Activated CD4-positive, alpha-beta T cell treated with anti-CD3 and anti-CD28 coated beads for 36 hours (primary cell): ENCODE measurements at regions of chr2 and their contacts with region 1.

Region 1: DNA sequence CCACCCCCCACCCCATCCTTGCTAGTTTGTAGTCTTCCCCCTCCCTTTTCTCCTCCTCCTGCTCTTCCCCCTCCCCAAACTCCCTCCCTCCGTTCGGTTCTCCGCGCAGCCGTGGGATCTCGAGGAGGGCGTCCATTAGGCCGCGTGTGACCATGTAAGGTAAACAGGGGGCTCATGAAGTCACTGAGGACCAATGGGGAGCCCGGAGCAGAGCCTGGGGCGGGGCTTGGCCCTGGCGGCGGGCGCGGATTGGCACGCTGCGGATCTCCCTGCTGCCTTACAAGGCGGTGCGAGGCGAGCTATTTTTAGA is 246 bp upstream of the KLF7 start:
- DNase-seq: peak; percentile 98
- ATAC-seq: peak; percentile 91
- H3K4me3 Mint-ChIP-seq: peak overlapping the region; percentile 90
- H3K27ac Mint-ChIP-seq: peak overlapping the region; percentile 95
- H3K4me1 Mint-ChIP-seq: peaks cover 44% of the 10 kb centered on the region
- H3K27me3 Mint-ChIP-seq: no peaks in the 10 kb centered on the region

Region 2: GRCh38 chr2:206740800-206741199 is 425.2 kb before region 1 on chr2:
- CTCF ChIA-PET with region 1: no interaction called
- POLR2A ChIA-PET with region 1: no interaction called
- intact Hi-C with region 1: no loop called
- DNase-seq: no peak
- ATAC-seq: no peak
- H3K4me3 Mint-ChIP-seq: no peak overlapping the region
- H3K27ac Mint-ChIP-seq: no peak overlapping the region
- H3K4me1 Mint-ChIP-seq: peaks cover 7% of the 10 kb centered on the region
- H3K27me3 Mint-ChIP-seq: peaks cover 14% of the 10 kb centered on the region

Region 3: DNA sequence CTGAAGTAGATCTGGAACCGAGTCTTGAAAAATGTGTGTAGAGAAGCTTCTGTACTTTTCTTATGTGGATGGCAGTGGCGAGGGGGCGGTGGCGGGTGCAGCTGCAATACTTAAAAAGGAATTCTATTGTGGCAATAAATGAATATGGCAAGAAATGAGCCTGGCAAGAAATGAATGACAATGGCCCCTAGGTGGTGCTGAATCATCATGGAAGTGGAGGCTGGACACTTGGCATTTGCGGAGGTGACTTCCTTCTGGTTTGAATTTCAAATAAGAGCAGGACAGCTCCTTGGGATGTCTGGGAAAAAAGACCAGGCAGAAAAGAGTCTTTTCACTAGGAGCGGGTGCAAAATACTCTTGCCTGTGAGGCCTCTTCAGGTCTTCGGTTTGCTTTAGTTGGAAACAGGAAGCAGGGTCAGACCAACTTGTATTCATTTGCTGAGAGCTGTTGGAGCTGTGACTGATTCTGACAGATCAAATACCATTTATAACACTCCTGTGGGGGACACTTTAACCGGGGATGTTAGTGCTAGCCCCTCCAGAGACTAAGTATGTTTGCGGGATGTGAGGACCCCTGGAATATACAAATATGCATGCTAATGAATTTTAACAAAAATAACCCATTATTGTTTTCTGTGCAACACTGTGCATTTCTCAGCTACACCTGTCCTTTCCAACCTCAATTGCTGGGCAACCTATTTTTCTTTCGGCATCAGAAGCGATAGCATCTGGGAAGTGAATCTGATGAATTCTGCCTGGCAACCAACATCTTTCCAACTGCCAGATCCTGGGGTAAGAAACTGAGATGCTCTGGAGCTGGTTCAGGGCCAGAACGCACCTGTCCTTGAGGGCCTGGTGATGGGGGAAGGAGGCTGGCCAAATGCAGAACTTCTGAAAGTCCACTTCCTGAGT is 365.2 kb before region 1 on chr2:
- CTCF ChIA-PET with region 1: no interaction called
- POLR2A ChIA-PET with region 1: no interaction called
- intact Hi-C with region 1: loop called in 1 of 2 experiments (anchors 10 kb)
- DNase-seq: peak; percentile 61
- ATAC-seq: peak; percentile 40
- H3K4me3 Mint-ChIP-seq: peak overlapping the region; percentile 22
- H3K27ac Mint-ChIP-seq: peak overlapping the region; percentile 52
- H3K4me1 Mint-ChIP-seq: peaks cover 31% of the 10 kb centered on the region
- H3K27me3 Mint-ChIP-seq: no peaks in the 10 kb centered on the region

Region 4: DNA sequence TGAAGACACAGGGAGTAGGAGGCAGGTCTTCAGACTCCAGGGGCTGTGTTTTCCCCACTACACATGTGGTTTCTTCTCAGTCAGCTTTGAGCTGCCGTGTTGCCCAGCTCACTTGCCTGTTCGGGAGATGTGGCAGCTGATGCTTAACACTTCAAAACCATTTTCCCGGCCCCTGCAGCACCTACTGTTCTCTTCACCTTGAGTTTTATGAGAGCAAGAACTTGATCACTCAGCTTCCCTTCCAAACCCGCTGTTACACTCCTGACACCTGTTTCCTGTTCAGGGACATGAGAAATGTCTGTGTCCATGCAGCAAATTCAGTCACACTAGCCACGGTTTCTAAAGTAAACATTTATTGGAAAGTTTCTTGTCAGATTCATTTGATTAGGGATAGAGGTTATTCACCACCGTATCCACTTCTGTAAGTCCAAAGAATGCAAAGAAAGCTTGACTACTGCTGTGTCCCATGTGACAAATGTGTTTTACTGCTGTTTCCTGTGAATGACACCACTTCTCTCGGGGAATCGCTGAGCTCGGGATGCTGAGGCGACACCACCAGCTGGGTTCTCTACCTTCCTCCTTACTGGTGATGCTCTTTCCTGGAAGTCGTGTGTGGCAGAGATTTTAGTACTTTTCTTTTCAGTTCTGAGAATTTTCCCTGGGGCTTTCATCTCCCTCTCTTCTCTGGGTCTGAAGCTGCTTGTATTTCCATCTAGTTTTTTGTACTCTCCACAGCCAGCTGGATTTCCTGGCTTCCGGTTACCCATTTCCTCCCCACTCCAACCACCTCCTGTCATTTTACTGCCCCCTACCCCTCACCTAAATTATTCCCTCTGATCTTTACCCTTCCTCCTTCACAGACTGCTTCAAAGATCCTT is 92.0 kb before region 1 on chr2:
- CTCF ChIA-PET with region 1: no interaction called
- POLR2A ChIA-PET with region 1: interaction called, 8 read pairs
- intact Hi-C with region 1: loop called in 1 of 2 experiments (anchors 5 kb)
- DNase-seq: peak; percentile 61
- ATAC-seq: peak; percentile 80
- H3K4me3 Mint-ChIP-seq: peak overlapping the region; percentile 45
- H3K27ac Mint-ChIP-seq: peak overlapping the region; percentile 87
- H3K4me1 Mint-ChIP-seq: peaks cover 34% of the 10 kb centered on the region
- H3K27me3 Mint-ChIP-seq: peaks cover 5% of the 10 kb centered on the region

Region 5: DNA sequence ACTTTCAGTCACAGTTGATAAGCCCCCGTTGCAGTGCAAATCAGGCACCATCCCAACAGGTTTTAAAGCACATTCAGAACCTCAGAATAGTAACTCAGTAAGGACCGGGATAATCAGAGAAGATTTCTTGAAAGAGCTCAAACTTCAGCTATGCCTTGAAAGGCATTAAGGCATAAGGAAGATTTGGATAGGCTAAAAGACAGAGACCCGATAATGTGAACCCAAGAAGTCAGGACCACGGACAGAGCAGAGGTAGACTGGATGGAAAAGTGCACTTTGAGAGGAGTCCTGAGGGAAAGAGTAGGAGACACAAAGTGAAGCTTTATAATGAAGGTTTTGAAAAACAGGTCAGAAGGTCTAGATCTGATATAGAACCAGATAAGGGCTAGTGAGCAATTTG is 36.7 kb after region 1 on chr2:
- CTCF ChIA-PET with region 1: no interaction called
- POLR2A ChIA-PET with region 1: no interaction called
- intact Hi-C with region 1: no loop called
- DNase-seq: peak; percentile 29
- ATAC-seq: no peak
- H3K4me3 Mint-ChIP-seq: no peak overlapping the region
- H3K27ac Mint-ChIP-seq: no peak overlapping the region
- H3K4me1 Mint-ChIP-seq: no peaks in the 10 kb centered on the region
- H3K27me3 Mint-ChIP-seq: no peaks in the 10 kb centered on the region

Region 6: DNA sequence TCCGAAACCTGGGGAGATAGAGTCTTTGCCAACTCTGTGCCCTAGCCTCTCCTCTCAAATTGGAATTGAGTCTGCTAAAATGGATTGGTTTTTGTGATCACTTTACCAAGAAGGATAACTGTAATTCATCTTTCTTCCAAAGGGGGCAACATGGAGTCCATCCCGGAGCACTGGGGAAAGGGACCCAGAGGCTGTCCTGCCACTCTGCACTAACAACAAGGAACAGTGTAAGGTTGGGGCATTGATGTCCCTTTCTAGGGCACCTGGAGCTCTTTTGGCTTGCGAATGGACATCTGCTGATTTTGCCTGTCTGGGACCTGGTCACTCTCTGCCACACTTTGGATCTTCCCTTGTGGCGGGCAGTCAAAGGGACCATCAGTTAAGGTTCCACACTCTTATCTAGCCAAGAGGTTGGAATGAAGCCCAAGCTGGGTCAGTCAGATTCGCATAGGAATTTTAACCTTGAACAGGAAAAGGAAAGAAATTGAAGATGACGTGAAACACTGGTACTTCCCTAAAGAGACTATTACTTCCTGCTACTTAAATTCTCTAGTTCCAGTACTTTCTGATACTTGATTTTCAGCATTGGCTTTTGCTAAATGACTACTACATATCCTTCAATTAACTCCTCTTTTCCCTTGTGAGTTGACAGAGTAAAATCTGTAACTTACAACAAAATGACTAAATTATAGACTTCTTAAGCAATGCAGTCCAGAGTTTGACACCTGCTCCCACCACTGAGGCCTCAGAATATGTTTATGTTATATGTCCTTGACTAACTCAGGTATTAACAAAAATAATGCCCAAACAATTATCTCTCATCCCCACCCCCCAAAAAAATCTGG is 64.5 kb after region 1 on chr2:
- CTCF ChIA-PET with region 1: no interaction called
- POLR2A ChIA-PET with region 1: interaction called, 4 read pairs
- intact Hi-C with region 1: loop called (anchors 2 kb)
- DNase-seq: no peak
- ATAC-seq: peak; percentile 54
- H3K4me3 Mint-ChIP-seq: no peak overlapping the region
- H3K27ac Mint-ChIP-seq: peak overlapping the region; percentile 79
- H3K4me1 Mint-ChIP-seq: peaks cover 46% of the 10 kb centered on the region
- H3K27me3 Mint-ChIP-seq: no peaks in the 10 kb centered on the region

Region 7: GRCh38 chr2:207311316-207312005 is 145.5 kb after region 1 on chr2:
- CTCF ChIA-PET with region 1: no interaction called
- POLR2A ChIA-PET with region 1: no interaction called
- intact Hi-C with region 1: loop called (anchors 1 to 5 kb)
- DNase-seq: peak; percentile 74
- ATAC-seq: peak; percentile 97
- H3K4me3 Mint-ChIP-seq: peak overlapping the region; percentile 13
- H3K27ac Mint-ChIP-seq: peak overlapping the region; percentile 96
- H3K4me1 Mint-ChIP-seq: peaks cover 32% of the 10 kb centered on the region
- H3K27me3 Mint-ChIP-seq: no peaks in the 10 kb centered on the region

Region 8: DNA sequence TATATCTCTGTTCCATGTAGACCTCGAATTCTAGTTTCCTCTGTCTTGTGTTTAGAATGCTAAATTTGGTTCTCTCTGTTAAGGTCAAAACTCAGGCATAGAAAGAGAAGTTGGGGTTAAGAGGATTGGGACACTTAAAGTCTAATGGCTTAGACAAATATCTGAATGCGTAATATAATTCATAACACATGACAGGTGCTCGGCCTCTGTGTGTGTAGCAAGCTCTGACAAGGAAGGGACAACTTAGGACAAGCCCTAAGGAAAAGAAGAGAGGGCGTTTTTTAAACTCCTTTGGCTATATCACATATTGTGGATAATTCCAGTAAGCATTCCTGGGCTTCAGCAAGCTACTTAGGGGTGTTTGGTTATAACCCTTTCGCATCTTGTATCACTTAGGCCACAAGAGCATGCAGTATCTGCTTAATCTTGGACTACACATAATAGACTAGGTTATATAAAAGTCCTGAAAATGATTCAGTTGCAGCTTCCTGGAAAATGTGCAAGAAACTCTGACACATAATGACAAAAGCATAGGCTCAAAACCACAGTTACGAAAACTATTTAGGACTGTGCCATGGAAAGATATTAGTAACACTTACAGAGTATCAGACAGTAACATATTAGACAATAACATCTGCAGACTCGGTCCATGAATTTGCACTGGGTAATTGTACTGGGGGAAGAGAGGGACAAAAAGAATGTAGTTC is 347.7 kb after region 1 on chr2:
- CTCF ChIA-PET with region 1: no interaction called
- POLR2A ChIA-PET with region 1: no interaction called
- intact Hi-C with region 1: loop called in 1 of 2 experiments (anchors 5 kb)
- DNase-seq: no peak
- ATAC-seq: peak; percentile 65
- H3K4me3 Mint-ChIP-seq: peak overlapping the region; percentile 19
- H3K27ac Mint-ChIP-seq: peak overlapping the region; percentile 49
- H3K4me1 Mint-ChIP-seq: peaks cover 41% of the 10 kb centered on the region
- H3K27me3 Mint-ChIP-seq: no peaks in the 10 kb centered on the region

Region 9: DNA sequence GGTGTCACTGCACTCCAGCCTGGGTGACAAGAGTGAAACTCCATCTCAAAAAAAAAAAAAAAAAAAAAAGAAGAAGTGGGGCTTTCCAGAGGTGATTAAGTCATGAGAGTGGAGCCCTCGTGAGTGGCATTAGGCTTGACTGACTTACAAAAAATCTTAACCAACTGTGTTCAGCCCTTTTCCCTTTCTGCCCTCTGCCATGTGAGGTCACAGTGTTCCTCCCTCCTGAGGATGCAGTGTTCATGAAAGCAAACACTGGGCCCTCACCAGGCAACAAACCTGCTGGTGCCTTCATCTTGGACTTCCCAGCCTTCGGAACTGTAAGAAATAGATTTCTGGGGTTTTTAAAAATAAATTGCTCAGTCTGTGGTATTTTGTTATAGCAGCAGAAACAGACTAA is 496.2 kb after region 1 on chr2:
- CTCF ChIA-PET with region 1: no interaction called
- POLR2A ChIA-PET with region 1: no interaction called
- intact Hi-C with region 1: no loop called
- DNase-seq: peak; percentile 12
- ATAC-seq: peak; percentile 80
- H3K4me3 Mint-ChIP-seq: no peak overlapping the region
- H3K27ac Mint-ChIP-seq: no peak overlapping the region
- H3K4me1 Mint-ChIP-seq: peaks cover 3% of the 10 kb centered on the region
- H3K27me3 Mint-ChIP-seq: no peaks in the 10 kb centered on the region